Body of pancreas (tissue), 4 donors: ENCODE measurements at regions of chr9 and their contacts with region 1.

Region 1: DNA sequence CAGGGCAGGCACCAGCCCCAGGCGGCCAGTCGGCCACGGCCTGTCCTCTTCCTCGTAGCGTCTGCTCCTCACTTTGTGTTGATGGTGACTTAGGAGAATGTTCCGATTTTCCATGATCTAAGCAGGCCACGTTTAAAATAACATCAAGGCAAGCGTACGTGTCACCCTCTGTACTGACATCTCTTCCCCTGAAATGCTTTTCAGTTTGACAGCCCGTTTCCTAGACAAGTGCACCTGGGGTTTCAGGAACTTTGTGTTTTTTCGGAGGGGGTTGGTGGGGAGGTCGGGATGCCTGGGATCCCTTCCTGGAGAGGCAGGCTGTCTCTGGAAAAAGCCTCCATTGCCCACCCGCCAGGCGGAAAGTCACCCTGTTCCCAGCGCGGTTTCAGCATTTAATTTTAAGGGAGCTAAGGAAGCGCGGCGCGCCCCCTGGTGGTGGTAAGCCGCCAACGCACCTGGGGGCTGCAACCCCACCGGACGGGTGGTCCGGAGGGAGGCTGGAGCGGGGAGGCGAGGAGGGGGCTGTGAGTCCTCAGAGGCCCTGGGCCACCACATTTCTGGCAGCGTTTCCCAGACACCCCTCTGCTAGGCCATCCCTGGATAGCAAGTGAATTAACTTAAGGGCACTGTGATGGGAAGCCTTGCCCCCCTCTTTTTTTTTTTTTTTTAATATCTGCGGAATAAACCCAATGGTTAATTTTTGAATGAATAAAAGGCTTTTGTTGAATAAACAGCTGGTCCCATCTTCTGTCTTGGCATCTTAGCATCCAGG is 29.5 kb upstream of the HMCN2 start:
- DNase-seq: peak; percentile 57 to 73 (median 64)
- ATAC-seq: peak; percentile 51
- H3K4me3 ChIP-seq: no peak overlapping the region
- H3K27ac ChIP-seq: no peak overlapping the region
- H3K4me1 ChIP-seq: peaks cover 4% of the 10 kb centered on the region
- H3K27me3 ChIP-seq: no peaks in the 10 kb centered on the region
- CTCF ChIP-seq: peak; percentile 88 to 99 (median 97)
- POLR2A ChIP-seq: no peak

Region 2: DNA sequence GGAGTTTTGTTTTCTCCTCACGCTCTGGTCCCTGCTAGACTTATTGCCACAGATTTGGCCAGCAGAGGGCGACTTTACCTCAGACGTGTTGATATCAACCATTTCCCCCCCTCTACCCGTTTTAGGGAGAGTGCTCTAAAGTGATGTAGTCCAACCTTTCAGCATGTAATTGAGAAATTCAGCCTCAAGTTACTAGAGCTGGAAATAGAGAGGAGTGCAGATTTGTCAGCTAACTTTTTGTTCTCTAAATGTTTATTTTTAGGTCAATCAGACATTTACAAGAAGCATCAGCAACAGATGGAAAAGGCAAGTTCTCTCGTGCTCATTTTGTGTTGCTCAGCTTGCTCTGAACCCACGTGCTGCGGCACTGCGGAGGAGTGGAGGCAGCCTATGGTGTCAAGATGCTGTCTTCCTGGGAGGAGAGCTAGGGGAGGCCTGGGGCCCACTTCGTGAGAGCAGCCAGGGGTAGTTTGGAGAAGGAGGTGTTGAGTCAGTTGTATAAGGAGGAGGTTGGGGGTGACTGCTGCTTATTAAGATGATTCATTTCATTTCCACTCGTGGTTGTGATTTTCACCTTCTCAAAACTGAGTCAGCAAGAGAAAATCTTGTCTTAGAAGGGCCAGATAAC is 128.7 kb before region 1 on chr9:
- intact Hi-C with region 1: loop called (anchors 5 kb)
- DNase-seq: peak; percentile 78 to 91 (median 84)
- ATAC-seq: peak; percentile 81
- H3K4me3 ChIP-seq: no peak overlapping the region
- H3K27ac ChIP-seq: no peak overlapping the region
- H3K4me1 ChIP-seq: no peaks in the 10 kb centered on the region
- H3K27me3 ChIP-seq: no peaks in the 10 kb centered on the region
- CTCF ChIP-seq: peak; percentile 62 to 82 (median 76)
- POLR2A ChIP-seq: no peak

Region 3: DNA sequence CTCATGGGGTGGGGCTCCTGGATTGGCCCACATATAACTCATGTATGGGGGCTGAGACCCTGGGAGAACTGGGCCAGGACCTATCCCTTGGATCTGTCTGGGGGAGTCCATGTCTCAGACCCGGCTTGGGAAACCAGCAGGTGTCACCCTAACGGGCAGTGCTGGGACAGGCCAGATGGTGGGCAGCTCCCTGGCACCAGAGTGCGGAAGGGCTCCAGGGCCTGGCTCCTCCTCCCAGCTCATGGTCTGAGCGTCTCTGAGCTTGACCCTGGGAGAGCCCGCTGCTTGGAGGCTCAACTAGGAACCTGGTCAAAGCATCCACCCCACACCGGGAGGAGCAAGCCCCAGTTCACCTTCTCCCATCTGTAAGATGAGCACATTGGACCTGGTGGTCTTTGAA is 79.4 kb before region 1 on chr9:
- intact Hi-C with region 1: loop called (anchors 5 kb)
- DNase-seq: peak; percentile 84 to 92 (median 90)
- ATAC-seq: peak; percentile 95
- H3K4me3 ChIP-seq: no peak overlapping the region
- H3K27ac ChIP-seq: no peak overlapping the region
- H3K4me1 ChIP-seq: peaks cover 7% of the 10 kb centered on the region
- H3K27me3 ChIP-seq: no peaks in the 10 kb centered on the region
- CTCF ChIP-seq: peak; percentile 33 to 74 (median 59)
- POLR2A ChIP-seq: no peak

Region 4: DNA sequence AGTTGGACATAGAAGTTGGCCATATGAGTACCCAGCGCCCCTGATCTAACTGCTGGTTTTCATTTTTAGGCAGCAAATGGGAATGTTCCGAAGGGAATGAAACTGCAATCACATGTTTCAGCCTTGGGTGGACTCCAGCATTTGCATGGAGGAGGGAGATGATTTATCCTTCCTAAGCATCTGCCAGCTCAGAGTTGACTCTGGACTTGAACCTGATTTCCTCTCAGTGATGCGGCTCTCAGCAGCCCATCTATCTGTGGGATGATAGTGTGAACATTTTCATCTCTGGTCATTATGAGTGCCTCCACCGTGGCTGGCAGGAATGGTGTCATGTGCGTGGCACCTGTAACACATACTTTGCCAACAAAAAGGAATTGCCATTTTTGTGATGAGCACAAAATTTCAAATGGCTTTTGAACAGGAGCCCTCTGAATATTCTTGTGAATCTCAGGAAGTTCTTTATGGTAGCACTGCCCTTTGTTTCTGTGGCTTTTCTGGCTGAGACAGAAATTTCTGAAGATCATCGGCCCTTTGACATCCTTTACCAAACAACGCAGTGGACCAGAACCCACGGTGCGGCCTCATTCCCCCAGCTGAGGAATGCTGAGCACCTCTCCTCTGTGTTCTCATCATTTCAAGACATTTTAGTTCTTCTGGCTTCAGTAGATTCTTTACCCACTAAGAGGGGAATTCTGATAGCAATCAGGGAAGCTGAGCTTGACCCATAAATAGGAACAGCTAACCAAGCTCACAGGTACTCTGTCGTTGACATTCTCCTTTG is 371.7 kb after region 1 on chr9:
- intact Hi-C with region 1: no loop called
- DNase-seq: no peak
- ATAC-seq: no peak
- H3K4me3 ChIP-seq: no peak overlapping the region
- H3K27ac ChIP-seq: no peak overlapping the region
- H3K4me1 ChIP-seq: no peaks in the 10 kb centered on the region
- H3K27me3 ChIP-seq: no peaks in the 10 kb centered on the region
- CTCF ChIP-seq: no peak
- POLR2A ChIP-seq: no peak